ENCODE measurements at regions of chr16 and their contacts with region 1.

Region 1: DNA sequence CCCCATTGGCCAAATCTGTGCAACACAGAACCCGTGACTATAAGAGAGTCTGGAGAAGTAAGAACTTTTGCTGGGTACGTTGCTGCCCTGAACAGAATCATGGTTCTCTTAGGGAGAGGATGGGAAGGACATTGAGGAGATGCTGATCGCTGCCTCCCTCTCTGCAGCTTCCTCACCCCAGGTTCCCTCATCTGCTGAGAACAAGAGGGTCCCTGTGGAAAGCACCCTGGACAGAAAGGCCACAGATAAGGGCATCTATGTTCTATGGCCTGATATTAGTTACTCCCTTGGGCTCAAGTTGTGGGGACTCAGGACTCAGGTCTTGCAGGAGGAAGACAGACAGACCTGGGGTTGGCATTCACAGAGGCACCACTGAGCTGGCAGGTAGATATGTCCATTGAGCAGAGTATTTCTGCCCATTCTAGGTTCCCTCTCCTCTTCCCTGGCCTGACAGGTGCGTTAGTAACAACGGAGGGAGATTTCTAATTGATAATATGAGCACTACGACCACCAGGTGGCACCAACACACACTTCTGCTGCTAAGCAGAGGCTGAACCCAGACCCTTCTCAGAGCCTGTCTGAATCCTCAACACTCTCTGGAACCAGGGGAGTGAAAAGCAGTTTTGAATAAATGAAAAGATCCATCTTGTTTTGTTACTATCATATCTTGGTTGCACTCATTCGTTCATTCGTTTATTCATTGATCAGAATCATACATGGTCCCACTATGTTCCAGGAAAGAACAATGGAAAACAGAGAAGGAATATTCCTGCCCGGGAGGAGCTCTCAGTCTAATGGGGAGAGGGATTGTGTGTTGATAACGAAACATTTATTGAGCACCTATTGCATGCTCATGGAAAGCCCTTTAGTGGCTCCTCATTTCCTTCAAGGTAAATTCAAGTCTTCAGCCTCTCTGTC is 56.4 kb downstream of the SLC6A2 start:
- DNase-seq: peak; percentile 74
- H3K4me3 Mint-ChIP-seq: no peak overlapping the region
- H3K27ac Mint-ChIP-seq: no peak overlapping the region
- H3K4me1 Mint-ChIP-seq: no peaks in the 10 kb centered on the region
- H3K27me3 Mint-ChIP-seq: no peaks in the 10 kb centered on the region
- CTCF ChIP-seq: peak; percentile 63

Region 2: DNA sequence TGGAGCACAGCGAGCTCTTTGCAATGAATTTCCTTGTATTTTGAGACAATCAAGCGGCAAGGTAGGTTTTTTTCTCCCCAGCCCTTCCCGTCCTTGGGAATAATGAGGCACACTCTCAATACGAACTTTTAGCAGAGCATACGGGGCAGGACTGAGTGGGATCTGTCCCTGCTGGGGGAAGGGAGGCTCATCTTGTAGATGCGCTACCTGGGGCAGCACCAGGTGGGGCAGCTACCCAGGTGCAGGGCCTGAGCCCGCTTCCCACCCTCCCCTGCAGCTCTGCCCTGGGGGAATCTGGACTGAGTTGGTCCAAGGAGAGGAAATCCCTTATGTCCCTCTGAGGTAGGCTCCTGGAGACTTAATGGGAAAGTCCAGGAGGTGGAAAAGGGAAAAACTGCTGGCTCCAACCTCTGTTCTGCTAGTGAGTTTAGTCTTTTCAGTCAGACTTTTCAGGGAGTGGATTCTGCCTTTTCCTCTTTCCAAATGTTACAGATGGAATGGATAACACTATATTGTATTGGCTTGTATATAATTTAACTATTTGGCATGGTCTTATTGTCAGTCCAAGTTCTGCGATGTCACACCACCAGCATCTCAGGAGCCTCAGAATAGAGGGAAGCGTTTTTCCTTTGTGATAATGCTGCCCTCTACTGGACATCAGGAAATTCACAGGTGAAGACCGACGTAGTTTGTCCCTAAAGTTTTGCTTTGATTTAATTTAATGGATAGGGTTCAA is 130.3 kb after region 1 on chr16:
- CTCF ChIA-PET with region 1: interaction called, 112 read pairs
- POLR2A ChIA-PET with region 1: interaction called, 3 read pairs
- intact Hi-C with region 1: loop called (anchors 1 kb)
- DNase-seq: peak; percentile 66
- H3K4me3 Mint-ChIP-seq: no peak overlapping the region
- H3K27ac Mint-ChIP-seq: no peak overlapping the region
- H3K4me1 Mint-ChIP-seq: no peaks in the 10 kb centered on the region
- H3K27me3 Mint-ChIP-seq: peaks cover 19% of the 10 kb centered on the region
- CTCF ChIP-seq: peak; percentile 59

Region 3: GRCh38 chr16:55876854-55877253 is 164.6 kb after region 1 on chr16:
- CTCF ChIA-PET with region 1: no interaction called
- POLR2A ChIA-PET with region 1: no interaction called
- intact Hi-C with region 1: no loop called
- DNase-seq: no peak
- H3K4me3 Mint-ChIP-seq: no peak overlapping the region
- H3K27ac Mint-ChIP-seq: no peak overlapping the region
- H3K4me1 Mint-ChIP-seq: no peaks in the 10 kb centered on the region
- H3K27me3 Mint-ChIP-seq: peaks cover 35% of the 10 kb centered on the region
- CTCF ChIP-seq: no peak

Region 4: DNA sequence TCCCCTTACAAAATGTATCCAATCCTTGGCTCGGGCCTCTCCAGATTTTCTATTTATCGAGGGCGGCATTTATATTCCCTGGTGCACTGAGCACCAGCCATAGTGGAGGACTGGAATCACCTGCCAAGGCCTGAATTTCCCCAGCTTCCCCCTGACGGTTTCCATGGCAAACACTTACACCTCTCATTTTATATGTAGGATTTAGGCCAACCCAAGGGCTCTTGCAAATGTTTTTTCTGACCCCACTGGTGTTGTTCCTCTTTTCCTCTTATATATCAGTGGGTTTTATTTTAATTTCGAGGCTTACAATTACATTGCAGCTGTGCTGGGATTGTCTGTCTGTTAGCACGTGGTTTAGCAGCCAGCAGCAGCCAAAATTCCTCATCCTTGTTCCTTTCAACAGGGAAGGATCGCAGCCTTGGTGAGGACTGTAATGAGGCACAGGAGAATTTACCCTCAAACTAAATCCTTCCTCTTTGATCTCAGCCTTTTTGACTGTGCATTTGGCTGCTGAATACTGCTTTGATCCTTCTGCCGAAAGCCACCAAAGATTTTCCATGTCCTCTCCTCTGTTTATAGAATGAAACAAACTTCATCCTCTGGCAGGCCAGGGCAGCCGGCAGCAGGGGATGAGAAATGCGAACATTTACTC is 189.5 kb after region 1 on chr16:
- CTCF ChIA-PET with region 1: no interaction called
- POLR2A ChIA-PET with region 1: no interaction called
- intact Hi-C with region 1: no loop called
- DNase-seq: no peak
- H3K4me3 Mint-ChIP-seq: no peak overlapping the region
- H3K27ac Mint-ChIP-seq: no peak overlapping the region
- H3K4me1 Mint-ChIP-seq: no peaks in the 10 kb centered on the region
- H3K27me3 Mint-ChIP-seq: peaks cover 37% of the 10 kb centered on the region
- CTCF ChIP-seq: no peak

Measured in MCF 10A (cell line).